OCI-LY7 (cell line): ENCODE measurements at regions of chr15 and their contacts with region 1.

Region 1: DNA sequence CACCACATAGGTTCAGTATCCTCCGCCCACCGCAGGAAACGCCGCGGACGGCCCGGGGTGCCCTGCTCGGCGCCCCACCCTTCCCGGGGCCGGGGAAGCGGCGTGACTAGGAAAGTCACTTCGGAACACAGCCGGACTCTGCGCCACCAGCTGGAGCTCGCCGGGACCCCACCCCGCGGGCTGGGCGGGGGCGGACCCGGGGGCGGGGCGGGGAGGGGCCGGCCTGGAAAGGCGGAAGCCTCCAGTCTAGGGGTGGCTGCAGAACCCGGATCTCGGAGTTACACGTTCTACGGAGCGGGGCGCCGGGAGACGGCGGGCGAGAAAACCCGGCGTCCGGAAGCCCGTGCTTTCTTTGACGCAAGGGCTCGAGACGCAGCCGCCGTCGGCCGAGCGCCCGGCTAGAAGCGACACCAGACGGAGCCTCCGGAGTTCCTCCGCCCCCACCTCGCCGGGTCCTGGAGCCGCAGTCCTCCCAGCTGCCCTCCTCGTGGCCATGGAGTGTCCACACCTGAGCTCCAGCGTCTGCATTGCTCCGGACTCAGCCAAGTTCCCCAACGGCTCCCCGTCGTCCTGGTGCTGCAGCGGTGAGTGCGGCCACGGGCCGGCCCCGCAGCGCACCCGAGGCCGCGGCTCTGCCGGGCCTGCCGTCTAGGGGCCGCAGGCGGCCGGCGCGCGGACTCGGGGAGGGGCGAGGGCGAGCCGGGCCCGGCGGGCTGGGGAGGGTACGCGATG is at the start of gene USP3:
- DNase-seq: peak; percentile 97
- H3K4me3 ChIP-seq: peak within 1 kb of the TSS; percentile 87
- H3K27ac ChIP-seq: peak within 1 kb of the TSS; percentile 77
- H3K4me1 ChIP-seq: peaks cover 72% of the 10 kb centered on the region
- CTCF ChIP-seq: no peak; the same call in 1 of the 2 replicates
- total RNA-seq, gene USP3: 26.3 and 34.6 TPM in 2 replicates

Region 2: DNA sequence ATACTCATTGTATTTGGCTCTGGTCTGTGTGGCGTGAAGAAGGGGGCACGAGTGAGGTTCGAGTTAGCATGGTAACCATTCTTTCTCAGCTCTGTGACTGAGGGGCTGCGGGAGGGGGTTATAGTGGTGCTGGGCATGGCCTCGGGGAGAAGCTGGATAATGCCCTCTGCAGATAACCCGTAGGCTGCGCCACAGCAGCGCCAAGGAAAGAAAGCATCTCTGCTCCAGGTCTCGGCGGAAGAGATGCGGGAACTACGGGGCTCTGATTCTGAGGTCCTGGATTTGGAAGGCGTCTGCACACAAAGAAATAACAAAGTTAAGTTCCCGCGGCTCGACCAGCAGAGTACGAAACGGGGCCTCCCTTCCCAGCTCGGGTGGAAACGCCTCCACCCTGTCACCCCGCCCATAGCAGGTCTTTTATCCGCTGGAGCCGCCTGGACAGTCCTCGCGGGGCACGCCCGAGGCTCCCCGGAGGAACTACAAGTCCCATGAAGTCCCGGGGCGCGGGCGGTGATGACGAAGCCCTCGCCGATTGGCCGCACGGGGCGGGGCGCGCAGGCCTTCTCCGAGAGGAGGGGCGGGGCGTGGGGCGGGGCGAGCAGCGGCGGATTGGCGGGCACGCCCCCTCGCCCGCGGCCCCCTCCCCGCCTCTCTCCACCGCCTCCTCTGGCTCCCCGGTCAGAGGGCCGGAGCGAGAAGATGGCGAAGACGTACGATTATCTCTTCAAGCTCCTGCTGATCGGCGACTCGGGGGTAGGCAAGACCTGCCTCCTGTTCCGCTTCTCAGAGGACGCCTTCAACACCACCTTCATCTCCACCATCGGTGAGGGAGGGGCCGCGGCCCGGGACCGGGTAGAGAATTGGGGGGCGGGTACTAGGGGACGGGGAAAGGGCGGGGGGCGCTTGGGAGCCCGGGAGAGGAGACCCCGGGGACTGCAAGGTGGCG is 315.2 kb before region 1 on chr15 and contains the start of gene RAB8B:
- CTCF ChIA-PET with region 1: no interaction called
- POLR2A ChIA-PET with region 1: no interaction called
- intact Hi-C with region 1: loop called (anchors 10 kb)
- DNase-seq: peak; percentile 96
- H3K4me3 ChIP-seq: peak within 1 kb of the TSS; percentile 79
- H3K27ac ChIP-seq: peak within 1 kb of the TSS; percentile 93
- H3K4me1 ChIP-seq: peaks cover 46% of the 10 kb centered on the region
- CTCF ChIP-seq: no peak
- total RNA-seq, gene RAB8B: 4.9 and 9.5 TPM in 2 replicates

Region 3: GRCh38 chr15:63473999-63474809 is 30.2 kb before region 1 on chr15:
- CTCF ChIA-PET with region 1: no interaction called
- POLR2A ChIA-PET with region 1: interaction called, 30 read pairs
- intact Hi-C with region 1: loop called (anchors 1 kb)
- DNase-seq: peak; percentile 76
- H3K4me3 ChIP-seq: peak overlapping the region; percentile 45
- H3K27ac ChIP-seq: peak overlapping the region; percentile 88
- H3K4me1 ChIP-seq: peaks cover 64% of the 10 kb centered on the region
- CTCF ChIP-seq: peak; percentile 45; the same call in 1 of the 2 replicates

Region 4: DNA sequence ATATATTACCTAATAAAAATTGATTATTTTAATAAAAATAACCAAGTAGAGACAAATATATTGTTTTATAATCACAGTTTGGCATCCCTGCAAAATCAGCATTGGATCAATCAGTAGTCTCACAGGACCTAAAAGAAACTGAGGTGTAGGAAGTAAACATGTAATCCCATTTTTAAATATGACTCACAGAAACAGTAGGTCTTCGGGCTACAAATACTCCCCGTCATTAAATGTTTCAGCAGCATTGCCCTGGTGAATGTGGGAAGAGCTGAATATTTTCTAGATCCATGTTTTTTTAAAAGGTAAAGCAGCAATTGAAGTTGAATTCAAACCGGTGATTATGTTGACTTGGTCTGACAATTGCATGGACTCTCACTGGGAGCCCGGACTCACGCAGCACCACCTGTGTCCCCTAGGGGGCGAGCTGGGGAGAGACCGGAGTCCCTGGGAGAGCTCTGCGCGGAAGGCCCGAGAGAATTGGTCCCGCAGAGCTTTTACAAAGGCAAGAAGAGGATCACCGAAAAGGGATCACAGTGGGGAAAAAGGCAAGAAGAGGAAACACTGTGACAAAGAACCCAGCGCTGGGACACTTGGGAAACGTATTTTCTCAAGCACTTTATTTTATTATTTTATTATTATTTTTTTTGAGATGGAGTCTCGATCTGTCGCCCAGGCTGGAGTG is 17.2 kb before region 1 on chr15:
- CTCF ChIA-PET with region 1: interaction called, 4 read pairs
- POLR2A ChIA-PET with region 1: interaction called, 7 read pairs
- intact Hi-C with region 1: loop called (anchors 1 kb)
- DNase-seq: peak; percentile 90
- H3K4me3 ChIP-seq: peak overlapping the region; percentile 48
- H3K27ac ChIP-seq: peak overlapping the region; percentile 83
- H3K4me1 ChIP-seq: peaks cover 72% of the 10 kb centered on the region
- CTCF ChIP-seq: peak; percentile 97

Region 5: DNA sequence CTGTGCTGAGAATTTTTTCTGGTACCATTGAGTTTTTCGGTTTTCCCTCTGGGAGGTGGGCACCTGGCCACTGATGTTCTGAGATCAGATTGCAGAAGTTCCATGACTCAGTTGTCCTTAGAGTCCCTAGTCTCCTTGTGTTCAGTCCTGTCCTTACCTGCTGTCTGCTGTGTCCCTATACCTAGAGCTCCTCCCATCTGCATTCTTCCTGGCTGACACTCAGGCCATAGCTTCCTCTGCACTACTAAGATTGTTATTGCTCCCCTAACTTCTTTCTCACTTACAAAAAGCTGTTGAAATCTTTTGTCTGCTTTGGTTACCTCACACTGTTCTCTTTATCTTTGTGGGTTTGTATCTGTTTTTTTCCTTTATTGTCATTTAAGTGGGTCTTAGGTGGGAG is 13.2 kb after region 1 on chr15:
- CTCF ChIA-PET with region 1: interaction called, 3 read pairs
- POLR2A ChIA-PET with region 1: interaction called, 10 read pairs
- intact Hi-C with region 1: no loop called
- DNase-seq: no peak
- H3K4me3 ChIP-seq: no peak overlapping the region
- H3K27ac ChIP-seq: no peak overlapping the region
- H3K4me1 ChIP-seq: peaks cover 38% of the 10 kb centered on the region
- CTCF ChIP-seq: no peak

Region 6: GRCh38 chr15:63599401-63600000 is 95.1 kb after region 1 on chr15:
- CTCF ChIA-PET with region 1: no interaction called
- POLR2A ChIA-PET with region 1: interaction called, 4 read pairs
- intact Hi-C with region 1: loop called (anchors 5 kb)
- DNase-seq: peak; percentile 53
- H3K4me3 ChIP-seq: no peak overlapping the region
- H3K27ac ChIP-seq: no peak overlapping the region
- H3K4me1 ChIP-seq: peaks cover 61% of the 10 kb centered on the region
- CTCF ChIP-seq: peak; percentile 56

Region 7: DNA sequence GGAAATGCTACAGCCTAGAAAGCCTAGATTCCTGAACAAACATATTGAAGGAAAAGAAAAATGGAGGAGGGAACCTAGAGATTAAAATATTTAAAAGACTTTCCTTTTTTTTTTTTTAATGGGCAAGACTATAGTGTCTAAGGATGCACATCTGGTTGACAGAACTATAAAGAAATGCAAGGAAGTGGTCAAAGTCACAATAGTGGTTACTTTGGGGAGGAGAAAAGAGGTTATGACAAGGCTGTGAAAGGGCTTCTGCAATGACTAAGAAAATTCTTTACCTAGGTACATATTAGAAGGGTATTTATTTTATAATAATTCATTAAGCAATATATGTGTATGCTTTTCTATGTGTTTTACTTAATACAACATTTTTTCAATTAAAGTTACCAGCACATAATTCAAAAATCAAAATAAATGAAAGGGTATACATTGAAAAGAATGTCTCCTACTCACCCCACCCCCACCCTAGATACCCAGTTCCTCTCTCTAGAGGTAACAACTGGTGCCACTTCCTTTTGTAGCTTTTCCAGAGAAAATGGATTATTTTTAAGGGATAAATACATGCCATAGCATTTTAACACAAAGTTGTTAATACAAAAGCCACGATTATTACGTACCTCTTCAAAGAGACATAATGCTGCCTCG is 259.2 kb after region 1 on chr15:
- CTCF ChIA-PET with region 1: no interaction called
- POLR2A ChIA-PET with region 1: no interaction called
- intact Hi-C with region 1: no loop called
- DNase-seq: no peak
- H3K4me3 ChIP-seq: no peak overlapping the region
- H3K27ac ChIP-seq: no peak overlapping the region
- H3K4me1 ChIP-seq: peaks cover 4% of the 10 kb centered on the region
- CTCF ChIP-seq: no peak